GM12878 (cell line): ENCODE measurements at regions of chr17 and their contacts with region 1.

Region 1: DNA sequence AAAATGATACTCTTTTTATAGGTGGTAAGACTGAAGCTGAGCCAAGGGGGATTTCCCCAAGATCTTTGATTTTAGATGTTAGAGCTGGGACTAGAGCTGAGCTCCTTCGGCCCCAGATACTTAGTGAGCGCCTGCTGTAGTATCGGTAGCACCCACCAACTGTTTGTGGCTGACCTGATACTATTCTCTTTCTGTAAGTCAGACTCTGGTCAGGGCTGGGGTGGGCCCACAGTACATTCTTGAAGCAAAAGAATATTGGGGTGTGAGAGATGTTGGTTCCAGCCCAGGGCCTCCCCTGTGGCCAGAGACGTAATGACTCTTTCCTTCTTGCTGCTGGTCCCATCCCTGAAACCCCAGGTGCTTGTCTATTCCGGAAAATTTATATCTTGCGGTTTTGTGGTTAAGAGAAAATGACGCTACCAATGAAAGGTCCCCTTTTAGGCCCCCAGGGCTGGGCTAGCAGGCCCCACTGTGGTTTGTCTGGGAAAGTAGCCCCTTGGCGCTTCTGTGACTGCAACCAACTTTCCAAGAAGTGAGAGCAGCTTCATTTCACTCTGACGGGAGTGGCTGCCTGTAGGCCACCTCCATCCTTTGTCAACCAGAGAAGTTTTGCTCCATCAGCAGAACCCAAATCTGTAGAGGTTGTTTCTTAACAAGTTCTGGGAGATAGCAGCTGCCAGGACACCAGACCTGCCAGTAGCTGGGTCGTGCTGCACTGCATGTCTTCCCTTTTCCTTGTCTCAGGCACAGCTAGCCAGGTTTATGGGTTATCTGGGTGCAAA is 86.4 kb upstream of the LGALS9 start:
- DNase-seq: peak; percentile 96
- ATAC-seq: peak; percentile 86
- H3K4me3 ChIP-seq: no peak overlapping the region
- H3K27ac ChIP-seq: peak overlapping the region; percentile 48; the same call in 1 of the 2 replicates
- H3K4me1 ChIP-seq: peaks cover 68% of the 10 kb centered on the region
- H3K27me3 ChIP-seq: no peaks in the 10 kb centered on the region
- CTCF ChIP-seq: peak; percentile 12 to 31 (median 23); a peak in 4 of 6 replicates
- EP300 ChIP-seq: peak; percentile 90 to 95
- POLR2A ChIP-seq: no peak
- RAD21 ChIP-seq: no peak

Region 2: GRCh38 chr17:27323524-27324206 is 220.9 kb before region 1 on chr17:
- CTCF ChIA-PET with region 1: no interaction called
- POLR2A ChIA-PET with region 1: no interaction called
- RAD21 ChIA-PET with region 1: no interaction called
- SMC1A ChIA-PET with region 1: no interaction called
- in situ Hi-C with region 1: no loop called
- intact Hi-C with region 1: no loop called
- DNase-seq: no peak
- ATAC-seq: no peak
- H3K4me3 ChIP-seq: no peak overlapping the region
- H3K27ac ChIP-seq: no peak overlapping the region
- H3K4me1 ChIP-seq: no peaks in the 10 kb centered on the region
- H3K27me3 ChIP-seq: no peaks in the 10 kb centered on the region
- CTCF ChIP-seq: no peak
- EP300 ChIP-seq: no peak
- POLR2A ChIP-seq: no peak
- RAD21 ChIP-seq: no peak

Region 3: DNA sequence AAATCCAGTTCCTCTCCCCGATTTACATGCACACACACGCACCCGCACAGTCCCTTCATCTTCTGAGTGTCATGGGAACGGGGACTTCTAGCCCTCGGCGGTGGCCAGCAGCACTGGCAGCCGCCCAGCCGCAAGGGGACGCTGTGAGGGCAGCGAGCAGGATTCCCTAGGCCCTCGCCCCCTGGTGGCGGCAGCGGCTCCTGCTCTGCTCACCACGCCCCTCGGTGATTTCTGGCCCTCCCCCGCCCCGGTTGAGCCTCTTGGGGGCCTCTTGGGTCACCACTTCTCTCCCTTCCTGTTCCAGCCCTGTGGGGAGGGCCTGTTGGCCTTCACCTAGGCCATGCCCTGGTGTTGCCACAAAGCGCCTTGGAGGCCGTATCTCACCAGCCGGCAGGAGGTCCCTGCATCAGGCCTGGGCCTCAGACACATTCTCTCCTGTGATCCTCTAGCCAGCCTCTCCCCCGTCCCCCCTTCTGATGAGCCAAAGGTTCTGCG is 163.5 kb before region 1 on chr17:
- CTCF ChIA-PET with region 1: interaction called, 3 read pairs
- POLR2A ChIA-PET with region 1: no interaction called
- RAD21 ChIA-PET with region 1: interaction called, 7 read pairs
- SMC1A ChIA-PET with region 1: interaction called, 5 read pairs
- in situ Hi-C with region 1: loop called (anchors 10 kb)
- intact Hi-C with region 1: loop called (anchors 10 kb)
- DNase-seq: peak; percentile 27
- ATAC-seq: peak; percentile 96
- H3K4me3 ChIP-seq: no peak overlapping the region
- H3K27ac ChIP-seq: no peak overlapping the region
- H3K4me1 ChIP-seq: peaks cover 14% of the 10 kb centered on the region
- H3K27me3 ChIP-seq: no peaks in the 10 kb centered on the region
- CTCF ChIP-seq: peak; percentile 100; a peak in 5 of 6 replicates
- EP300 ChIP-seq: no peak
- POLR2A ChIP-seq: no peak
- RAD21 ChIP-seq: peak; percentile 67

Region 4: GRCh38 chr17:27473748-27474609 is 70.6 kb before region 1 on chr17:
- CTCF ChIA-PET with region 1: interaction called, 11 read pairs
- POLR2A ChIA-PET with region 1: interaction called, 23 read pairs
- RAD21 ChIA-PET with region 1: interaction called, 98 read pairs
- SMC1A ChIA-PET with region 1: interaction called, 77 read pairs
- in situ Hi-C with region 1: loop called (anchors 5 kb)
- intact Hi-C with region 1: loop called (anchors 1 kb)
- DNase-seq: peak; percentile 97
- ATAC-seq: peak; percentile 35
- H3K4me3 ChIP-seq: peak overlapping the region; percentile 42
- H3K27ac ChIP-seq: peak overlapping the region; percentile 98
- H3K4me1 ChIP-seq: peaks cover 85% of the 10 kb centered on the region
- H3K27me3 ChIP-seq: no peaks in the 10 kb centered on the region
- CTCF ChIP-seq: no peak
- EP300 ChIP-seq: peak; percentile 68 to 81; a peak in 2 of 4 replicates
- POLR2A ChIP-seq: no peak
- RAD21 ChIP-seq: peak; percentile 17; the same call in 1 of the 2 replicates

Region 5: GRCh38 chr17:27506348-27507231 is 38.0 kb before region 1 on chr17:
- CTCF ChIA-PET with region 1: interaction called, 6 read pairs
- POLR2A ChIA-PET with region 1: interaction called, 3 read pairs
- RAD21 ChIA-PET with region 1: interaction called, 47 read pairs
- SMC1A ChIA-PET with region 1: interaction called, 22 read pairs
- in situ Hi-C with region 1: loop called (anchors 5 kb)
- intact Hi-C with region 1: loop called (anchors 1 kb)
- DNase-seq: peak; percentile 70
- ATAC-seq: peak; percentile 82
- H3K4me3 ChIP-seq: peak overlapping the region; percentile 61; the same call in 1 of the 2 replicates
- H3K27ac ChIP-seq: peak overlapping the region; percentile 79
- H3K4me1 ChIP-seq: peaks cover 30% of the 10 kb centered on the region
- H3K27me3 ChIP-seq: no peaks in the 10 kb centered on the region
- CTCF ChIP-seq: no peak
- EP300 ChIP-seq: peak; percentile 67 to 69; a peak in 3 of 4 replicates
- POLR2A ChIP-seq: 0 out of 2 replicates have a peak, but pooled peaks have one; percentile 24
- RAD21 ChIP-seq: 0 out of 2 replicates have a peak, but pooled peaks have one; percentile 13

Region 6: DNA sequence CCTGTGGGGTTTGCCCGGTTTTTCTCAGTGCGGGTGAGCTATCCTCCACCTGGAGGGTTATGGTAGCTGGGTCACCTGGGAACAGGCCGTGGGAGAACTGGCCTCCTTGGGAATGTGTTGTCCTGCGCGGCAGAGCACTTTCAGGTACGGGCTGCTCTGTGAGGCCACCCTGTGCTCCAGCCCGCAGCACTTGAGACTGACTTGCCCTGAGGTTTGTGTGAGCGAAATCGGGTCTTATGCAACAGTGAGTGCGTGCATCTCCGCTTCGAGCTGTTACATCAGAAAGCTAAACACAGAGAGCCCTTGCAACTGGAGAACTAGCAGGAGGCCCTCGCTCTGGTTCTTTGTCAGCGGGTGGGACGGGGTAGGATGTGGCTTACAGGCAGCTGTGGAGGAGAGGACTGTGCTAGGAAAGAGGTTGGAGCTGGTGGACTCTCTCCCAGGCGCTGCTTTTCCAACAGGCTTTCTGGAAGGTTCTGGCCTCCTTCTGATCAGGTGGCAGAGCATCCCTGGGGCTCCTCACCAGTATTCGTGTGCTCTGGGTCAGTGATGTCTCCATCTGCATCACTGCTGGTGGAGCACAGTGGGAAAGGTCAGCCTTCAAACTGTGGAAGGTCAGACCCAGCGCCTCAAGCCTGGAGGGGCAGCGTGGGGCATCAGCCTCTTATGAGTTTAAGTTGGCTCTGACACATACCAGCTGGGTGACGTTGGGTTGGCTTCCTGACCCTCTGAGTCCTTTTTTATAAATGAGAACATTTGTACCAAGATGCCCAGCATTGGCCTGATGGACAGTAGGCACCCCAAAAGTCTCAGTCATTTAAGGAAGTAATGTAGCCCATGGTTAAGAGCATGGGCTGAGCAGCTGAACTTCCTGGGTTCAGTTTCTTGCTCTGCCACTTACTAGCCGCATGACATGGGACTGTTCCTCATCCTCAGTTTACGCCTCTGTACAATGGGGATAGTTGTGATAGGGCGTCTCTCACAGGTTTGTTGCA is 12.0 kb before region 1 on chr17:
- CTCF ChIA-PET with region 1: interaction called, 9 read pairs
- POLR2A ChIA-PET with region 1: interaction called, 4 read pairs
- RAD21 ChIA-PET with region 1: interaction called, 25 read pairs
- SMC1A ChIA-PET with region 1: interaction called, 27 read pairs
- in situ Hi-C with region 1: no loop called
- intact Hi-C with region 1: no loop called
- DNase-seq: no peak
- ATAC-seq: no peak
- H3K4me3 ChIP-seq: no peak overlapping the region
- H3K27ac ChIP-seq: no peak overlapping the region
- H3K4me1 ChIP-seq: peaks cover 8% of the 10 kb centered on the region
- H3K27me3 ChIP-seq: no peaks in the 10 kb centered on the region
- CTCF ChIP-seq: no peak
- EP300 ChIP-seq: no peak
- POLR2A ChIP-seq: no peak
- RAD21 ChIP-seq: no peak

Region 7: DNA sequence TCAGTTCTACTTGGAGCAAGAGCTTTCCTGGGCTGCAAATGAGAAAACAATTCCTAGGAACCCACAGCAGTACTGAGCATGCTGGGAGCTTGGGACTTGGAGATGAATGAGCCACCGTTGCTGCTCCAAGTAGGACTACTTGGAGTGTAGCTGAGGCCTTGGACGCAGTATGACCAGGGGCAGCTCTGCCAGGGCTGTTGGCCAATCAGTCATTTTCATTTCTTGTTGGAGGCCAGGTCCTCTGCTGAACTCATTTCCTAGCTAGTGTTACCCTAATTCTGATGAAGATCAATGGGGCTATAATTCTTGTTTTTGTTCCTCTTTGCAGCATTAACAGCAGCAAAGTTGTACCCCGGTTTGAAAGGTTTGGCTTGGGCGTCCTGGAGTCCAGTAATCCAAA is 78.4 kb after region 1 on chr17:
- CTCF ChIA-PET with region 1: no interaction called
- POLR2A ChIA-PET with region 1: no interaction called
- RAD21 ChIA-PET with region 1: no interaction called
- SMC1A ChIA-PET with region 1: no interaction called
- in situ Hi-C with region 1: no loop called
- intact Hi-C with region 1: no loop called
- DNase-seq: no peak
- ATAC-seq: no peak
- H3K4me3 ChIP-seq: no peak overlapping the region
- H3K27ac ChIP-seq: no peak overlapping the region
- H3K4me1 ChIP-seq: no peaks in the 10 kb centered on the region
- H3K27me3 ChIP-seq: no peaks in the 10 kb centered on the region
- CTCF ChIP-seq: no peak
- EP300 ChIP-seq: no peak
- POLR2A ChIP-seq: no peak
- RAD21 ChIP-seq: no peak

Region 8: DNA sequence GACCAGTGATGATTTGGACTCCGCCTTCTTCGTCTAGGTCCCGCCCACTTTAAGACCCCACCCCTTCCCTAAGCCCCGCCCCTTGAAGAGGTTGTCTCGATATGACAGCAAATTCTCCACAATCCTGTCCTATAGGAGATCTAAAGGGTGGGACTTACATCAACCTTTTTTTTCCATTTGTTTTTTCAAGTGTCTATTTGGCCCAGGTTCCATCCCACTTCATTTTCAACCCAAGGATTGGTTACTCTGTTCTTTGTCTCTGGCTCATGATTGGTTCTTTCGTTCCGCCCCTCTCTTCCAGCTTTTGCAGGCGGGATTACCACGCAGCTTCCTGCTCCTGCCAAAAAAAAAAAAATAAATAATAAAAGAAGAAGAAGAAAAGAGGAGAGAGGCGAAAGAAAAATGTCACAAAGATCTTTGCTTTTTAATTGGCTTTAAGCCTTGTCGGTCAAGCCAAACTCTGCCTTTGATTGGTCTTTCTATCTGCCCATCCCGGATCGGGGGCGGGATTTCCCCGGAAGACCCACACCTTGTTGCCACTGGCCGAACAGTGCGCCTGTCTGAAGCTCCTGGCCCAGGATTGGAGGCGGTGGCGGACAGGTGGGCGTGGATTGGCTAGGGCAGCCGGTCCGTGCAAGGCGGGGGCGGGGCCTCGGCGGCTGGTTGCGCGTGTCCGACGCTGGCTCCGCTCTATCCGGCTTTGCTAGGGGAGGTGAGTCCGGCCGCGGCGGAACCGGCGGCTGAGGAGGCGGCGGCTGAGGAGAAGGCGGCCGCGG is 496.7 kb after region 1 on chr17:
- CTCF ChIA-PET with region 1: no interaction called
- POLR2A ChIA-PET with region 1: no interaction called
- RAD21 ChIA-PET with region 1: no interaction called
- SMC1A ChIA-PET with region 1: no interaction called
- in situ Hi-C with region 1: loop called (anchors 10 kb)
- intact Hi-C with region 1: no loop called
- DNase-seq: peak; percentile 97
- ATAC-seq: peak; percentile 96
- H3K4me3 ChIP-seq: peak overlapping the region; percentile 53
- H3K27ac ChIP-seq: no peak overlapping the region; the same call in 1 of the 2 replicates
- H3K4me1 ChIP-seq: peaks cover 10% of the 10 kb centered on the region
- H3K27me3 ChIP-seq: no peaks in the 10 kb centered on the region
- CTCF ChIP-seq: no peak
- EP300 ChIP-seq: peak in 1 of 2 experiments; percentile 7; a peak in 1 of 4 replicates
- POLR2A ChIP-seq: peak; percentile 94
- RAD21 ChIP-seq: no peak